ENCODE measurements at regions of chr1 and their contacts with region 1.

Region 1: DNA sequence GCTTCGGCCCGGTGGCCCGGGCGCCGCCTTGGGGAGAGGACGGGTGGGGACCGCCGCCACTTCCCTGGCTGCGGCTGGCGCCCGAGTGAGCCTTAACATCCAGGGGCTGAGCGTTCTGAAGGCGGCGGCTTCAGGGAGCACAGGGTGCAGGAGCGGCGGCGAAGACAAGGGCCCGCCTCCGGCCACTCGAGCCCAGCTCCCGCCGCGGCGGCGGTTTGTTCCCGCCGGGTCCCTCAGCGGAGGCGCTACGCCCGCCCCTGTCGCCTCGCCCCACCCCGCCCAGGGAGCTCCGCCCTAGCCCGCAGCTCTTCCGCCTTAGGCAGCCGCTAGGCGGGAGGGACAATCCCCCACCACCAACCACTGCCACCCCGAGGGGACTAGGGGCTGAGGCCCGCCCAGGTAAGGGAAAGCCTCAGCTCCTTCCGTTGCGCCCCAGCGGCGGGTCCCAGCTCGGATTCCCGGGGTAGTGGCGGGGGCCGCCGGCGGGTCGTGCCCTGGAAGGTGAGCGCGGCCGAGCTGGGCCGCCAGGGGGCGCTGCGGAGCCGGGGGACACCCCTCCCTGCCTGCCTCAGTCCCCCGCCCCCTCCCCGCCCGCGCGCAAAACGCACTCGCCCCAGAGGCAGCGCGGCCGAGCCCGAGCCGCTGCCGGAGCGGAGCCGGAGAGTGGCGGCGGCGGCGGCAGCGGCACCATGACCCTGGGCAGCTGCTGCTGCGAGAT is at the start of gene FOXD2:
- DNase-seq: peak; percentile 61 to 99
- H3K4me3 ChIP-seq: peak within 1 kb of the TSS; percentile 16 to 65 (median 49)
- H3K27ac ChIP-seq: no peak within 1 kb of the TSS
- H3K4me1 ChIP-seq: peaks cover 3 to 36% (median 18%) of the 10 kb centered on the region in 4 experiments
- H3K27me3 ChIP-seq: peaks cover 92 to 99% (median 98%) of the 10 kb centered on the region in 4 experiments
- CTCF ChIP-seq: peak in 2 of 3 experiments; percentile 54 to 68; a peak in 3 of 4 replicates
- EP300 ChIP-seq: no peak
- POLR2A ChIP-seq: no peak
- RAD21 ChIP-seq: peak; percentile 30 to 38; a peak in 3 of 4 replicates
- total RNA-seq, gene FOXD2: not detected in 2 replicates

Region 2: GRCh38 chr1:46960250-46960649 is 477.4 kb before region 1 on chr1:
- CTCF ChIA-PET with region 1: no interaction called
- POLR2A ChIA-PET with region 1: no interaction called
- DNase-seq: no peak
- H3K4me3 ChIP-seq: no peak overlapping the region
- H3K27ac ChIP-seq: no peak overlapping the region
- H3K4me1 ChIP-seq: no peaks in the 10 kb centered on the region
- H3K27me3 ChIP-seq: no peaks in the 10 kb centered on the region
- CTCF ChIP-seq: no peak
- EP300 ChIP-seq: no peak
- POLR2A ChIP-seq: no peak
- RAD21 ChIP-seq: no peak

Region 3: GRCh38 chr1:47309427-47309826 is 128.2 kb before region 1 on chr1:
- CTCF ChIA-PET with region 1: no interaction called
- POLR2A ChIA-PET with region 1: no interaction called
- DNase-seq: no peak
- H3K4me3 ChIP-seq: no peak overlapping the region
- H3K27ac ChIP-seq: no peak overlapping the region
- H3K4me1 ChIP-seq: peaks cover 0 to 5% (median 0%) of the 10 kb centered on the region in 4 experiments; a peak in 1 of 7 replicates
- H3K27me3 ChIP-seq: no peaks in the 10 kb centered on the region
- CTCF ChIP-seq: no peak
- EP300 ChIP-seq: no peak
- POLR2A ChIP-seq: no peak
- RAD21 ChIP-seq: no peak

Region 4: GRCh38 chr1:47416319-47417169 is 21.1 kb before region 1 on chr1:
- CTCF ChIA-PET with region 1: interaction called, 140 read pairs
- POLR2A ChIA-PET with region 1: interaction called, 3 read pairs
- DNase-seq: peak in 1 of 2 experiments; percentile 77
- H3K4me3 ChIP-seq: peak overlapping the region; percentile 29 to 58 (median 31); a peak in 7 of 8 replicates
- H3K27ac ChIP-seq: no peak overlapping the region
- H3K4me1 ChIP-seq: no peaks in the 10 kb centered on the region; a peak in 1 of 7 replicates
- H3K27me3 ChIP-seq: peaks cover 43 to 78% (median 72%) of the 10 kb centered on the region in 4 experiments
- CTCF ChIP-seq: no peak
- EP300 ChIP-seq: no peak
- POLR2A ChIP-seq: no peak
- RAD21 ChIP-seq: no peak

Region 5: DNA sequence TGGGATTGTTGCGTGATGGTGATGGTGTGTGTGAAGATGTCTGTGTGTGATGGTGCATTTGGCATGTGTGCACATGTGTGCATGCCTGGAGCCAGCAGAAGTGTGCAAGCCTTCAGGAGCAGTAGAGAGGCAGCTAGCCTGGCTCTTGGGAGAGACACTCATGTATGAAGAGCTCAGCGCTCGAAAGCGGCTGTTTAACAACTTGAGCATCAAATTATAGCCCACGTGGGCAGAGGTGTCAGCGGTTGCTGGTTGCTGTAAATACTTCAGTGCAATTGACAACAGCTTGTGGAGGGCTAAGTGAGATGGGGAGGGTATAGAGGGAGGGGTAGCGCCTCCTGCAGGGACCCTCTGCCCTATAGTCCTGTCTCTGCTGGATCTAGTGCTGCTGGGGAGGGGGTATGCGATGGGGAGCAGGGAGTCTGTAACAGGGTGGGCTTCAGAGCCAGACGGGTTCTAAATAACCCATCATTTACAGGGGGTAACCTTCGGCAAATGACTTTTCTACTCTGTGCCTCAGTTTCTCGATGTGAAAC is 21.7 kb after region 1 on chr1:
- CTCF ChIA-PET with region 1: interaction called, 24 read pairs
- POLR2A ChIA-PET with region 1: no interaction called
- DNase-seq: no peak
- H3K4me3 ChIP-seq: 0 out of 8 replicates have a peak overlapping the region, but pooled peaks of 2 of the 4 experiments have one; percentile 6 to 13
- H3K27ac ChIP-seq: no peak overlapping the region
- H3K4me1 ChIP-seq: peaks cover 8 to 16% (median 12%) of the 10 kb centered on the region in 4 experiments
- H3K27me3 ChIP-seq: peaks cover 0 to 7% (median 0%) of the 10 kb centered on the region in 4 experiments; a peak in 3 of 7 replicates
- CTCF ChIP-seq: no peak
- EP300 ChIP-seq: no peak
- POLR2A ChIP-seq: no peak
- RAD21 ChIP-seq: no peak

Region 6: DNA sequence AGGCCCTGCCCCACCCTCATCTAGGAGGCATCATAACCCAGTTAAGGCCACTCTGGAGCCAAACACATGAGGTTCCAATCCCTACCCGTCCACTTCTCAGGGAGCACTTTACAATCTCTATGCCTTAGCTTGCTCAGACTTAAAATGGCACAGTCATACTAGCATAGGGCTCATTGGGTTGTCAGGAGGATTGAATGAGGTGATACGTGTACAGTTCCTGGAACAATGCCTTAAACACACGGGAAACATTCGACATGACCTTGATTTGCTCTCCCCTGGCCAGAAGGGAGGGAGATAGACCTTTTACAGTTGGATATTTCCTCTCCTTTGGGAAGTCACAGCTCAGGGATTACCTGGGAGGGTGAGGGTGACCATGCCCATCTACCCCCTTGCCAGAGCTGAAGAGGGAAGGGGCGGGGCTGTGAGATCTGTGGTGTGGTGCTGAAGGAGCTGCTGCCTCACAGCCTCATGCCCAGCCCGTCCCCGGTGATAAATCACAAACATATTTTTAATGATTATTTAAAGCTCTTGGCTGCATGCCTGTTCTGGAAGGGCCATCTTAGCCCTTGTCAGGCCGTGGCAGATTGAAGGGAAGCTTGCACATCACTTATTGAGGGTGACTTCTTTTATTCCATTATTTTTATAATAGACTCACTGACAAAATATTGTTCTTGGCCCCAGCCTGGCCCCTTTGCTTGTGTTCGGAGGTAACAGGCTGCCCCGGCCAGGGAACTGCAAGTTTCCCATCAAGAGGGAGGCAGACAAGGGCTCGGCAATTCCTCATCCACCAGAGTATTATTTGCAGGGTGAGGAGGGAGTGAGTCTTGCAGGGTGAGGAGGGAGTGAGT is 83.7 kb after region 1 on chr1:
- CTCF ChIA-PET with region 1: interaction called, 26 read pairs
- POLR2A ChIA-PET with region 1: no interaction called
- DNase-seq: no peak
- H3K4me3 ChIP-seq: no peak overlapping the region
- H3K27ac ChIP-seq: no peak overlapping the region
- H3K4me1 ChIP-seq: peaks cover 3 to 16% (median 6%) of the 10 kb centered on the region in 4 experiments; a peak in 6 of 7 replicates
- H3K27me3 ChIP-seq: peaks cover 0 to 4% (median 0%) of the 10 kb centered on the region in 4 experiments; a peak in 4 of 7 replicates
- CTCF ChIP-seq: no peak
- EP300 ChIP-seq: no peak
- POLR2A ChIP-seq: no peak
- RAD21 ChIP-seq: no peak

Region 7: DNA sequence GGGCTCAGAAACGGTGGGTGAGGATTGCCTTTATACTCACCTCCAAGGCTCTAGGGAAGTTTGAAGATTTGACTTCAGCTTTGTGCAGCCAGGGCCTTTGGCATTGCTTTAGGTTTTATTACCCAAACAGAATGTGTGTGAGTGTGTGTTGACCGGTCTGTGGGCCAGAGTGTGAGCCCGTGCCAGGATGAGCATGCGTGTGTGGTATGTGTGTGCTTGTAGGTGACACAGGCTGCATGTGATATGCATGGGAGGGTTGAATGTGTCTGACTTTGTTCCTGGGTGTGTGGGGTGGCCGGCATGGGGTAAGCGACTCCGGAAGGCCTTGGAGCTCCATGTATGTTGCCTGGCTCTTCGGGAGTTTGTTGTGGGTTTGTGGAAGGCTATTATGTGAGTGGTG is 160.8 kb after region 1 on chr1:
- CTCF ChIA-PET with region 1: no interaction called
- POLR2A ChIA-PET with region 1: no interaction called
- DNase-seq: no peak
- H3K4me3 ChIP-seq: no peak overlapping the region
- H3K27ac ChIP-seq: no peak overlapping the region
- H3K4me1 ChIP-seq: peaks cover 0 to 3% (median 0%) of the 10 kb centered on the region in 4 experiments; a peak in 1 of 7 replicates
- H3K27me3 ChIP-seq: peaks cover 9 to 14% (median 12%) of the 10 kb centered on the region in 4 experiments
- CTCF ChIP-seq: no peak
- EP300 ChIP-seq: no peak
- POLR2A ChIP-seq: no peak
- RAD21 ChIP-seq: no peak

Region 8: DNA sequence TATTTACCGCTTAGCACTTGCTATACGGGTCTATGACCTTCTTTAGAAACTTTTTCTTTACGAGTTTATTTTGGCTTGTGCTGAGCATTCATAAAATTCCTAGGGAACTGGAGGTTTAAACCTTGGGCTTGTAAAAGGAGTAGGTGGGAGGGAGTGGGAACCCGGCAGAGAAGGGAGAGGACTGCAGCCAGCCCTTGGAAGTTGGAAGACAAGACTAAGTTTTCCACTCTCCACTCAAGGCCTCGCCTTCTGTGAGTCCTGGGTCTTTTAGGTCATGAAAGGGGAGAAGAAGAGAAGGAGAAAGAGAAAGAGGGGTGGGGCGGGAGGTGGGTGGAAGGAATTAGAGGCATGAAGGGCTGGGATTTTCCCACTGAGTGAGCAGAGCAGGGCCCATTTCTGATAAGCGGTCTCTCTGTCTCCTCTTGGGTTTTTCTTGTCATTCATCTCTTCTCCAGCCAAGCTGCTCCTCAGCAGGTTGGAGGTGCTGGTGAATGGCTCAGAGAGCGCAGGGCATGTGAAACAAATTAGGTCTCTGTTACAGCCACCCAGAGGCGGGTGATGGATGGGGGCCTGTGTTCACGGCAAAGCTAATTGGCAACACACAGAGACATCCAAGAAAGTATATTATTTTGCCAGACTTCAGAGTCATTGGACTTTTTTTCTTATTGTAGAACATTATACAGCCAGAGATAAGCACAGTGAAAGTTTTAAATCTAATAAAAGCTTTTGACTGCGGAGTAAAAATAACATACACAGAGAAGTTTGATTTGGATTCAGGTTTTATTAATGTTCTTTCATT is 247.6 kb after region 1 on chr1:
- CTCF ChIA-PET with region 1: interaction called, 10 read pairs
- POLR2A ChIA-PET with region 1: no interaction called
- DNase-seq: peak in 1 of 2 experiments; percentile 33
- H3K4me3 ChIP-seq: no peak overlapping the region
- H3K27ac ChIP-seq: no peak overlapping the region
- H3K4me1 ChIP-seq: peaks cover 9 to 19% (median 14%) of the 10 kb centered on the region in 4 experiments
- H3K27me3 ChIP-seq: no peaks in the 10 kb centered on the region; a peak in 2 of 7 replicates
- CTCF ChIP-seq: no peak
- EP300 ChIP-seq: no peak
- POLR2A ChIP-seq: no peak
- RAD21 ChIP-seq: no peak

Region 9: GRCh38 chr1:47725992-47726855 is 288.6 kb after region 1 on chr1:
- CTCF ChIA-PET with region 1: interaction called, 17 read pairs
- POLR2A ChIA-PET with region 1: interaction called, 4 read pairs
- DNase-seq: peak in 1 of 2 experiments; percentile 84
- H3K4me3 ChIP-seq: peak overlapping the region in 1 of 4 experiments; percentile 55; a peak in 2 of 8 replicates
- H3K27ac ChIP-seq: no peak overlapping the region
- H3K4me1 ChIP-seq: peaks cover 0 to 14% (median 9%) of the 10 kb centered on the region in 4 experiments; a peak in 6 of 7 replicates
- H3K27me3 ChIP-seq: peaks cover 14 to 37% (median 31%) of the 10 kb centered on the region in 4 experiments
- CTCF ChIP-seq: peak; percentile 89 to 98 (median 97)
- EP300 ChIP-seq: no peak
- POLR2A ChIP-seq: no peak
- RAD21 ChIP-seq: peak; percentile 88

Measured in H1 (cell line).